ENCODE measurements at regions of chr5 and their contacts with region 1.

Region 1: DNA sequence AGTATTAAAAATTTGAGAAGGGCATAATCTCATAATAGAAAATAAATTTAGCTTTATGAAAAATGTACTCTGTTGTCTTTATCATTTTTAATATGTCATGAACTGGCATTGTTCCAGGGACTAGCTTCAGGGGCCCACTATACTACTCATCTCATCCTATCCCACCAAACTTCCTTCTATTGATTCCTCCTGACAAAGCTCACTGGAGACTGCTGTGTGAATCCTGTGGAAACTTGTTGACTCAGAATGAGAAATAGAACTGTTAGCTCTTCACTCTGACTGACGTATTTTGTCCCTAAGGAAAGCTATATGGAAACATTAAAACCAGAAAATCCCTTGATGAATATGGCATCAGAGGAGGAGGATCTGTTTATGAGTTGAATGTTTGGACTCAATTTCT is 29.8 kb upstream of the BNIP1 start:
- DNase-seq: no peak
- H3K4me3 ChIP-seq: no peak overlapping the region
- H3K27ac ChIP-seq: no peak overlapping the region
- H3K4me1 ChIP-seq: no peaks in the 10 kb centered on the region
- H3K27me3 ChIP-seq: no peaks in the 10 kb centered on the region
- CTCF ChIP-seq: no peak

Region 2: DNA sequence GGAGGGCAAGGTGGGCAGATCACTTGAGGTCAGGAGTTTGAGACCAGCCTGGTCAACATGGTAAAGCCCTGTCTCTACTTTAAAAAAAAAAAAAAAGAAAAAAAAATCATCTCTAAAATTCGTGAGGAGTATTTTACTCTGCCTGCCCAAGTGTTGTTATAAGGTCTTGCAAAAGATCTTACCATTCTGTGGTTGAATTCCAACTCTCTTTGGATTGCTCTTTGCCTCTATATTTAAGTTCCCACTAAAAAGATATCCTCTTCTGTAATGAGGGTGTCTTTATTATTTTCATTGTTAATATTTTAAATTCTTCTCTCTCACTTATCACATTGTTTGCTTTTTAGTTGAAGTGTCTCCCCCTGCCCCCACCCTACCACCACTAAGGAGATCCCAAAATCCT is 25.0 kb before region 1 on chr5:
- CTCF ChIA-PET with region 1: no interaction called
- POLR2A ChIA-PET with region 1: no interaction called
- intact Hi-C with region 1: no loop called
- DNase-seq: no peak
- H3K4me3 ChIP-seq: no peak overlapping the region
- H3K27ac ChIP-seq: no peak overlapping the region
- H3K4me1 ChIP-seq: no peaks in the 10 kb centered on the region
- H3K27me3 ChIP-seq: no peaks in the 10 kb centered on the region
- CTCF ChIP-seq: no peak

Region 3: GRCh38 chr5:173103411-173103810 is 11.1 kb before region 1 on chr5:
- CTCF ChIA-PET with region 1: no interaction called
- POLR2A ChIA-PET with region 1: interaction called, 11 read pairs
- intact Hi-C with region 1: no loop called
- DNase-seq: no peak
- H3K4me3 ChIP-seq: no peak overlapping the region
- H3K27ac ChIP-seq: no peak overlapping the region
- H3K4me1 ChIP-seq: no peaks in the 10 kb centered on the region
- H3K27me3 ChIP-seq: no peaks in the 10 kb centered on the region
- CTCF ChIP-seq: no peak